Naive thymus-derived CD4-positive, alpha-beta T cell (primary cell): ENCODE measurements at regions of chr9 and their contacts with region 1.

Region 1: GRCh38 chr9:75238311-75238978 is 150.1 kb downstream of the OSTF1 start:
- DNase-seq: peak in 7 of 9 donors; percentile 20 to 67 (median 50)
- ATAC-seq: peak; percentile 88
- H3K4me3 ChIP-seq: no peak overlapping the region
- H3K4me3 Mint-ChIP-seq: no peak overlapping the region
- H3K27ac ChIP-seq: no peak overlapping the region
- H3K27ac Mint-ChIP-seq: no peak overlapping the region
- H3K4me1 ChIP-seq: no peaks in the 10 kb centered on the region
- H3K4me1 Mint-ChIP-seq: peaks cover 0 to 2% (median 0%) of the 10 kb centered on the region in 7 donors
- H3K27me3 ChIP-seq: no peaks in the 10 kb centered on the region
- H3K27me3 Mint-ChIP-seq: peaks cover 0 to 3% (median 0%) of the 10 kb centered on the region in 5 donors

Region 2: GRCh38 chr9:74935008-74935407 is 303.4 kb before region 1 on chr9:
- CTCF ChIA-PET with region 1: no interaction called
- POLR2A ChIA-PET with region 1: no interaction called
- intact Hi-C with region 1: loop called in 1 of 2 experiments (anchors 2 kb)
- DNase-seq: no peak
- ATAC-seq: no peak
- H3K4me3 ChIP-seq: no peak overlapping the region
- H3K4me3 Mint-ChIP-seq: no peak overlapping the region
- H3K27ac ChIP-seq: no peak overlapping the region
- H3K27ac Mint-ChIP-seq: no peak overlapping the region
- H3K4me1 ChIP-seq: no peaks in the 10 kb centered on the region
- H3K4me1 Mint-ChIP-seq: no peaks in the 10 kb centered on the region
- H3K27me3 ChIP-seq: no peaks in the 10 kb centered on the region
- H3K27me3 Mint-ChIP-seq: peaks cover 0 to 26% (median 13%) of the 10 kb centered on the region in 5 donors

Region 3: GRCh38 chr9:75001719-75002422 is 236.6 kb before region 1 on chr9:
- CTCF ChIA-PET with region 1: no interaction called
- POLR2A ChIA-PET with region 1: no interaction called
- intact Hi-C with region 1: loop called in 1 of 2 experiments (anchors 1 kb)
- DNase-seq: peak in 7 of 9 donors; percentile 52 to 77 (median 68)
- ATAC-seq: peak; percentile 98
- H3K4me3 ChIP-seq: no peak overlapping the region
- H3K4me3 Mint-ChIP-seq: no peak overlapping the region
- H3K27ac ChIP-seq: no peak overlapping the region
- H3K27ac Mint-ChIP-seq: no peak overlapping the region
- H3K4me1 ChIP-seq: peaks cover 0 to 4% of the 10 kb centered on the region in 2 donors
- H3K4me1 Mint-ChIP-seq: peaks cover 0 to 8% (median 5%) of the 10 kb centered on the region in 7 donors
- H3K27me3 ChIP-seq: no peaks in the 10 kb centered on the region
- H3K27me3 Mint-ChIP-seq: no peaks in the 10 kb centered on the region

Region 4: DNA sequence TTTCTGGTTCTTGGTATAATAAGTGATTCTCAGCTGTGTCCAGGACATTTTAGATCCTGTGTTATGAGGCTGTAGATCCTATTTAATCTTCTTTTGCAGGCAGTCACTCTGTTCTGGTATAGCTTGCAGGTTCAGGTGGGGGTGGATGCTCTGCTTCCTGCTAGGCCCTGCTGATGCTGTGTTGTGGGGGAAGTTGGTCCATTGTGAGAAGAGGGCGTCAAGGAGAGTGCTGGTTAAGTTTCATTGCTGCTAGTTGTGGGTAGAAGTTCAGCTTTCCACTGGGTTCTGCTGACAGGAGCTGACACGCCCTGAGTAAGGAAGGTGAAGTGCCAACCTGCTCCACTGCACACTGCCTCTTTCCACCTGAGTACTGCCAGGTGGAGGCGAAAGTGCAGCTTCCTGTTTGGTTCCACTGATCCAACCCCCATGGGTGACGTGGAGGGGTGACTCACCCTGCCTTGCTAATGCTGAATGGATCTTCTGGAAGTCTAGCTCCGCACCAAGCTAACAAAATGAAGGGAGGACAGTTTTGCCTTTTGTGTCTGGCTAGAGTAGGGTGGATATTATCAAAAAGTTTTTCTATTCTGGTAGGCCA is 166.8 kb before region 1 on chr9:
- CTCF ChIA-PET with region 1: no interaction called
- POLR2A ChIA-PET with region 1: no interaction called
- intact Hi-C with region 1: loop called in 1 of 2 experiments (anchors 2 kb)
- DNase-seq: peak in 7 of 9 donors; percentile 20 to 75 (median 35)
- ATAC-seq: peak; percentile 79
- H3K4me3 ChIP-seq: no peak overlapping the region
- H3K4me3 Mint-ChIP-seq: peak overlapping the region in 1 of 10 donors; percentile 13
- H3K27ac ChIP-seq: peak overlapping the region; percentile 25
- H3K27ac Mint-ChIP-seq: peak overlapping the region; percentile 26 to 96 (median 79)
- H3K4me1 ChIP-seq: peaks cover 8 to 10% of the 10 kb centered on the region in 2 donors
- H3K4me1 Mint-ChIP-seq: peaks cover 14 to 35% (median 21%) of the 10 kb centered on the region in 7 donors
- H3K27me3 ChIP-seq: no peaks in the 10 kb centered on the region
- H3K27me3 Mint-ChIP-seq: no peaks in the 10 kb centered on the region

Region 5: DNA sequence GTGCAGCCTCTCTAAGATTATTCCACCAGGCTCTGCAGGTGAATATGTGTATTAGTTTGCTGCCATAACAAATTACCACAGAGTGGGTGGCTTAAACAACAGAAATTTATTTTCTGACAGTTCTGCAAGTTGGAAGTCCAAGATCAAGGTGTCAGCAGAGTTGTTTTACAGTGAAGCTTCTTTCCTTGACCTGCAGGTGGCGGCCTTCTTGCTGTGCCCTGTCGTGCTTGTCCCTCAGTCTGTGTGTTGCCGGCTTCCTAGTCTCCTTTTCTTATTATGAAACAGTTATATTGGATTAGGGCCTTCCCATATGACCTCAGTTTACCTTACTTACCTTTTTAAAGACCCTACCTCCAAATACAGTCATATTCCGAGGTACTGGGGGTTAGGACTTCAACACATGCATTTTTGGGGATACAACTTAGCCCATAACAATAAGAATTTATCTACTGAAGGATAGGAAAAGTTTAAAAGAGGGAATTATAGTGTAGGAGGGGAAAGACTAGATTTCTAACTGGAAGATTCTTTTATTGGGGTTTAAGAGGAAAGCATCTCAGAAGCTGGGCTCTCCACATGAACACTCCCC is 52.8 kb before region 1 on chr9:
- CTCF ChIA-PET with region 1: interaction called, 3 read pairs
- POLR2A ChIA-PET with region 1: no interaction called
- intact Hi-C with region 1: loop called in 1 of 2 experiments (anchors 1 kb)
- DNase-seq: peak in 7 of 9 donors; percentile 10 to 38 (median 25)
- ATAC-seq: peak; percentile 74
- H3K4me3 ChIP-seq: no peak overlapping the region
- H3K4me3 Mint-ChIP-seq: peak overlapping the region in 3 of 10 donors; percentile 20 to 36 (median 25)
- H3K27ac ChIP-seq: no peak overlapping the region
- H3K27ac Mint-ChIP-seq: peak overlapping the region in 2 of 9 donors; percentile 30 to 81
- H3K4me1 ChIP-seq: peaks cover 12 to 13% of the 10 kb centered on the region in 2 donors
- H3K4me1 Mint-ChIP-seq: peaks cover 8 to 32% (median 28%) of the 10 kb centered on the region in 7 donors
- H3K27me3 ChIP-seq: no peaks in the 10 kb centered on the region
- H3K27me3 Mint-ChIP-seq: no peaks in the 10 kb centered on the region